AG04449 (cell line): ENCODE measurements at regions of chr16 and their contacts with region 1.

Region 1: GRCh38 chr16:66275775-66276428 is 90.6 kb upstream of the CDH5 start:
- DNase-seq: no peak
- H3K4me3 ChIP-seq: no peak overlapping the region
- CTCF ChIP-seq: peak; percentile 66

Region 2: DNA sequence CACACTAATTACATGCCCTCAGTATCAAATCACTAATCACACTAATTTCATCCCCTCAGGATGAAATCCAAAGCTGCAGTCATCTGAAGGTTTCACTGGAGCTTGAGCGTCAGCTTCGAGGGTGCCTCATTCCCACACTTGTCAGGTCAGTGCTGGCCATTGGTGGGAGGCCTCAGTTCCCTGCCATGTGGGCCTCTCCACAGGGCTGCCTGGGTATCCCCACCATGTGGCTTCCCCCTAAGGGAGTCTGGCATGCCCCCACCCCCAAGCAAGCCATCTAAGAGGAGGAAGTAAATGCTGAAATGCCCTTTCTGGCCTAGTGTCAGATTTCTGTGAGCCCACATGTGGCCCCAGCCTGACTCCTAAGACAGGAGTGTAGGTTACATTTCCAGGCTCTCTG is 12.0 kb after region 1 on chr16:
- CTCF ChIA-PET with region 1: interaction called, 15 read pairs
- POLR2A ChIA-PET with region 1: no interaction called
- DNase-seq: no peak
- H3K4me3 ChIP-seq: no peak overlapping the region
- CTCF ChIP-seq: no peak

Region 3: GRCh38 chr16:66295761-66296520 is 20.0 kb after region 1 on chr16:
- CTCF ChIA-PET with region 1: interaction called, 14 read pairs
- POLR2A ChIA-PET with region 1: no interaction called
- DNase-seq: no peak
- H3K4me3 ChIP-seq: no peak overlapping the region
- CTCF ChIP-seq: no peak

Region 4: DNA sequence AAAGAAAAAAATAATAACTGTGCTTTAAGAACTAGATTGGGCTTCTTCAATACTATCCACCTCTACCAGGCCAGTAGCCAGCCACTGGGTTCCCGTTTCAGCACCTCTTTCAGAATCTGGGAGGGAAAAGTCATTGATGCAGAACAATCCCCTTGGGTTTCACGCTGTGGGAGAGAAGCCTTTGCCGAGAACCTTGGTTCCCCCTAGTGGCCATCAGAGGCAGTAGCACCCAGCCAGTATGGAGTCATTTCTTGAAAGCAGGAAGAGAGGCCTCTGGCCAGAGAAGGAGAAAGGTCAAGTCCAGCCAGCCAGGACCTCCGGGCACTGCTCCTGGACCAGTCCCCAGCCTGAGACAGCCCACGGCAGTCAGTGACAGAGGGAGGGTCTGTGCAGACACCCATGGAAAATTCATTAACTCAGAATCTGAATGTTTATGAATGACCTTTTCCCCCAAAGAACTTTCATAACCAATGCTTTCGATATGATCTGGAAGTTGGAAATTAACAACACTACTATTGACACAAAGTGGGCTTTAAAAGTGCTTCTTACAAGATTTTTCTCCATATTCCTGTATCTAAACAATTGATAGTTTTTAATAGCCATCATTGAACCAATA is 39.4 kb after region 1 on chr16:
- CTCF ChIA-PET with region 1: interaction called, 90 read pairs
- POLR2A ChIA-PET with region 1: no interaction called
- DNase-seq: peak; percentile 4
- H3K4me3 ChIP-seq: no peak overlapping the region
- CTCF ChIP-seq: peak; percentile 93

Region 5: GRCh38 chr16:66344533-66345145 is 68.7 kb after region 1 on chr16:
- CTCF ChIA-PET with region 1: interaction called, 60 read pairs
- POLR2A ChIA-PET with region 1: no interaction called
- DNase-seq: no peak
- H3K4me3 ChIP-seq: no peak overlapping the region
- CTCF ChIP-seq: peak; percentile 50